Dendritic cell treated with granulocyte-macrophage colony-stimulating factor and Interleukin-4, amounts not matched to agents 40 ng/mL and 50 ng/mL, for 4 days (primary cell): ENCODE measurements at regions of chr20 and their contacts with region 1.

Region 1: DNA sequence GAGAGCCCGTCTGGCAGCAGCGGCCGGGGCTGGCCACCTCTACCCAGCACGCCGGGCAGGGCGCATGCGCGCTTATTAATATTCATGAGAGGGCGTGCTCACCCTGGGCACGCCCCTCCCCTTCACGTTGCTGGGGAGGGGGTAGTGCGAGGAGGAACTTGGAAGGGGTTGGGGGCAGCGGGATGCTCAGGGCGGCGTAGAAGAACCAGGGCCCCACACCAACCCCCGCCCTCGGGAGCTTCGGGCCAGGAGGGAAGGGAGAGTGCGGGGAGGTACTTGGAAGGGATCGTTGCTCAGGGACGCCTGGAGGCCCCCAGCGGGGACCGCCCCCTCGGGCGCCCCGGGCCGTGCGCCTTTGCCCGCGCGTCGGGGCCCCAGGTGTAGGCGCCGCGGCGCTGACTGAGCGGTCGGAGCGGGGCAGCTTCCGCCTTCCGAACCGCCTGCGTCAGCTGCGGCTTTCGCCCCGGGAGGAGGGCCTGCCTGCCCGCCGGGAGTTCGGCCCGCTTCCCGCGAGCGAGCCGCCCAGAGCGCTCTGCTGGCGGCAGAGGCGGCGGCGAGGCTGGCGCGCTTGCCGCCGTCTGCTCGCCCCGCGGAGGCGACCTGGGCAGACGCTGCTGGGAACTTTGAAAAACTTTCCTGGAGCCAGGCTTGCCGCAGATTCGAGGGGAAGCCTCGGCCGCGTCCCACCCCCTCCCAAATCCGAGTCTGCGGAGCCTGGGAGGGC is at the start of gene JAG1:
- H3K4me3 Mint-ChIP-seq: peak within 1 kb of the TSS; percentile 100
- H3K27ac Mint-ChIP-seq: peak within 1 kb of the TSS; percentile 98
- H3K4me1 Mint-ChIP-seq: peaks cover 36% of the 10 kb centered on the region
- H3K27me3 Mint-ChIP-seq: peaks cover 24% of the 10 kb centered on the region

Region 2: DNA sequence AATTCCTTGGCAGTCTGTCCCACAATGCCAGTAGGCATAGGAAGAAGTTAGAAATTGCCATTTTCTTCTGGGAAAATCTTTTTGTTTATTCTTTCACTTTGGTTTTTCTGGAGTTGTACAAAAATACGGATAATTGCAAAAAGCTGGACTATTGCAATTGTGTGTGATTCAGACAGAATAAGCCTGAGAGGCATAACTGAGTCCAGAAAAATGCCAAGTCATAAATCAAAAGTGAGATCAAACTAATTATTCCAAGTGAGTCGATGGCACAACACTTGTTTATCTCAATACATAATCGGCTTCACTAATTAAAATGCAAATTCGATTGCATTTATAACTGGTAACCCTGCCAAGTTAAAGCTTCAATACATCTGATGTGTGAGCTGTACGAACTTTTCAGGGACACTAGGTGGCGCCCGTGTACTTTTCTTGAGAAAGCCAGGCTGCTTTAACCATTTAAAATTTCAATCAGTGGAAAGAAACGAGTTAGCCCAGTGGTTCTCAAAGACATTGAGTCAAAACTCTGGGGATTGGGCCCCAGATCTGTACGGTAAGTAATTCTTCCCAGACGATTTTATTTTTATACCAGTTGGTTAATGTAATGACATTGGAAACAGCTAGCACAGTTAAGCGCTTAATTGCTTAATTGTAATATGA is 1057.2 kb before region 1 on chr20:
- intact Hi-C with region 1: loop called (anchors 2 kb)
- H3K4me3 Mint-ChIP-seq: no peak overlapping the region
- H3K27ac Mint-ChIP-seq: no peak overlapping the region
- H3K4me1 Mint-ChIP-seq: peaks cover 38% of the 10 kb centered on the region
- H3K27me3 Mint-ChIP-seq: peaks cover 53% of the 10 kb centered on the region

Region 3: GRCh38 chr20:10402938-10403608 is 271.1 kb before region 1 on chr20:
- intact Hi-C with region 1: no loop called
- H3K4me3 Mint-ChIP-seq: no peak overlapping the region
- H3K27ac Mint-ChIP-seq: peak overlapping the region; percentile 55
- H3K4me1 Mint-ChIP-seq: peaks cover 17% of the 10 kb centered on the region
- H3K27me3 Mint-ChIP-seq: no peaks in the 10 kb centered on the region

Region 4: GRCh38 chr20:10434832-10435812 is 239.0 kb before region 1 on chr20 and contains the start of gene SLX4IP:
- intact Hi-C with region 1: loop called (anchors 1 kb)
- H3K4me3 Mint-ChIP-seq: peak within 1 kb of the TSS; percentile 90
- H3K27ac Mint-ChIP-seq: peak within 1 kb of the TSS; percentile 100
- H3K4me1 Mint-ChIP-seq: peaks cover 46% of the 10 kb centered on the region
- H3K27me3 Mint-ChIP-seq: no peaks in the 10 kb centered on the region

Region 5: DNA sequence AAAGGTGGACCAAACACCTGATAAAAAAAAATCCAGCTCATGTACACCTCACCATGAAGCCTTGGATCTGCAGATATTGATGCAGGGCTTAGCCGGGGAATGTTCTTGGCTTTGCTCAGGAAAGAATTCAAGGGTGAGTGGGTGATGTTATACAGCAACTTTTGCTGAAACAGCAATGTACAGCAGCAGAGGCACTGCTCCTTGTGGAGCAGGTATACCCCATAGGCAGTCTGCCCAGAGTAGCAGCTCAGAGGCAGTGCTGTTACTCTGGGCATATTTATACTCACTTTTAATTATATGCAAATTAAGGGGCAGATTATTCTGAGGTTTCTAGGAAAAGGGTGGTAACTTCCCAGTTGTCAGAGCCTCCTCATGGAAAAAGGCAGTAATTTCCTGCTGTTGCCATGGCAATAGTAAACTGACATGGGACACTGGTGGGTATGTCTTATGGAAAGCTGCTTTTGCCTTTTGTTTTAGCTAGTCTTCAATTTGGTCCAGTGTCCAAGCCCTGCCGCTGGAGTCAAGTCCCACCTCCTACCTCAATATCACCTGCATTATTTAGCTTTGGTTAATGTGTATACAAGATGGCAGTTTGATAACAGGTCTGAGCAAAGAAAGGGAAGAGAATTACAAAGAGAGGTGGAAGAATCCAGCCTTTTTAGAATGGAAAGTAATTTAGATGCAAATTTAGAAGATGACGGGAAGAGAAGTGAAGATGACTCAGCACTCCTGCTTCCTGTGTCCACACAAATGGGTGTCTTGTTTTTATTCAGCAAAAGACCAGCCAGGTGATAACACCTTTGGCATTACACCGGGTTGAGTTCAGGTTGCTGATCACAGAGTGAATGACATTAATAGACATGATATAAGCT is 109.8 kb after region 1 on chr20:
- intact Hi-C with region 1: no loop called
- H3K4me3 Mint-ChIP-seq: no peak overlapping the region
- H3K27ac Mint-ChIP-seq: no peak overlapping the region
- H3K4me1 Mint-ChIP-seq: peaks cover 5% of the 10 kb centered on the region
- H3K27me3 Mint-ChIP-seq: no peaks in the 10 kb centered on the region

Region 6: GRCh38 chr20:11098888-11099287 is 424.7 kb after region 1 on chr20:
- intact Hi-C with region 1: loop called (anchors 10 kb)
- H3K4me3 Mint-ChIP-seq: no peak overlapping the region
- H3K27ac Mint-ChIP-seq: no peak overlapping the region
- H3K4me1 Mint-ChIP-seq: peaks cover 45% of the 10 kb centered on the region
- H3K27me3 Mint-ChIP-seq: peaks cover 3% of the 10 kb centered on the region

Region 7: DNA sequence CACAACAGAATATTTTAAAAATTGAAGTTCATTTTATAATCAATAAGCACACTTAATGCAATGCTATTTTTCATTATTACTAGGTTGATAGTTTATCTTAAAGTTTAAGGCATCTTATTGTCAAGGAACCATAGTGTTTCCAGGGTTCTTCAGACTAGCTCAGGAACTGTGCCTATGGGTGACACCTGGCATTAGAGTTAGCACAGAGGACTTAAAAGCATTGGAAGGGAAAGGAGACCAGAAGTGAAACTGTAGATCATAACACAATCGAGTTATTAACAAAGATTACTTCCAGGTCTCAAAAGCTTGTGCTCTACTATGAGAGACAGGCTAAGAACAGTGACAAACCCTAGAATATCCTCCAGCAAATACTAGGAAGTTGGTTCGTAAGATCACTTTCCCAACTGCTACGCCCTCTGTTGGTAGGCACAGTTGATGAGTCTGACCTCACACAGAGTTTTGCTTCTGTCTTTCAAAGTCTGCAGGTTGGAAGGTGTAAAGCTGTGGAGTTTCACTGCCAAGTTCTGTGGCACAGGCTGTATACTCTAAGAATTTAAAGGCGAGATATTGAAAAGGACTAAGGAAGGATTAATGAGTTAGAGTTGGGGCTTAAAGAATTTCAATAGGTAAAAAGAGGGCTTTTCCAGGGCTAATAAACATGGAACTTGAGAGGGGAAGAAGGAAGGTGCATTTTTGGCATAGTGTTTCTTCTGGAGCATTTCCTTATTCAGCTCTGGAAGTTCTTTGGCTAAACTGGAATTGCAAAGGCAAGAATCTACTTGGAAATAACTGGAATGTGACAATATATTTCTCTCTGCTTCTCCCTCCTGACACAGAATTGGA is 531.0 kb after region 1 on chr20:
- intact Hi-C with region 1: loop called (anchors 2 kb)
- H3K4me3 Mint-ChIP-seq: no peak overlapping the region
- H3K27ac Mint-ChIP-seq: peak overlapping the region; percentile 11
- H3K4me1 Mint-ChIP-seq: peaks cover 29% of the 10 kb centered on the region
- H3K27me3 Mint-ChIP-seq: peaks cover 1% of the 10 kb centered on the region

Region 8: DNA sequence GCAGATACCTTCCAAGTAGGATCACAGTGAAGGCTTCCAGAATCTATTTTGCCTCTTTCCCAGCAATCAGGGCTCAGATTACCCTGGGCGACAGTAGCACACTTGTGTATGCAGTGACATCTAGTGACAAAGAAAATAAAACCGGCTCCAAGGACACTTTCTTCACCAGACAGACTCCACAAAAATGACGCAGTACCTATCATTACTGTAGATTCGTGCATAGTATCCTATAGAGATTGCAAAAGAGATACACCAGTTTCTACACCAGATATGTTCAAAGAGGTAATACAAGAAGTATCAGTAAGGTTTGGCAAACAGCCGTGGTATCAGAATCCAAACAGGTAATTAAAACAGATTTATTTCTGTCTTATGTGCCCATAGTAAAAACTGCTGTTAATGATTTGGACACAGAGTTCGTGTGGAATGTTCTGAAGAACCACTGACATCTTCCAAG is 600.0 kb after region 1 on chr20:
- intact Hi-C with region 1: loop called (anchors 2 kb)
- H3K4me3 Mint-ChIP-seq: no peak overlapping the region
- H3K27ac Mint-ChIP-seq: no peak overlapping the region
- H3K4me1 Mint-ChIP-seq: peaks cover 10% of the 10 kb centered on the region
- H3K27me3 Mint-ChIP-seq: peaks cover 1% of the 10 kb centered on the region

Region 9: GRCh38 chr20:11544029-11544678 is 870.0 kb after region 1 on chr20:
- intact Hi-C with region 1: loop called (anchors 5 kb)
- H3K4me3 Mint-ChIP-seq: no peak overlapping the region
- H3K27ac Mint-ChIP-seq: no peak overlapping the region
- H3K4me1 Mint-ChIP-seq: no peaks in the 10 kb centered on the region
- H3K27me3 Mint-ChIP-seq: no peaks in the 10 kb centered on the region